ENCODE measurements at regions of chr12 and their contacts with region 1.

Region 1: GRCh38 chr12:57893431-57894353 is 47.2 kb upstream of the CTDSP2 start:
- DNase-seq: no peak
- ATAC-seq: no peak
- H3K4me3 Mint-ChIP-seq: no peak overlapping the region
- H3K27ac Mint-ChIP-seq: no peak overlapping the region
- H3K4me1 Mint-ChIP-seq: peaks cover 33% of the 10 kb centered on the region
- H3K27me3 Mint-ChIP-seq: peaks cover 35% of the 10 kb centered on the region

Region 2: DNA sequence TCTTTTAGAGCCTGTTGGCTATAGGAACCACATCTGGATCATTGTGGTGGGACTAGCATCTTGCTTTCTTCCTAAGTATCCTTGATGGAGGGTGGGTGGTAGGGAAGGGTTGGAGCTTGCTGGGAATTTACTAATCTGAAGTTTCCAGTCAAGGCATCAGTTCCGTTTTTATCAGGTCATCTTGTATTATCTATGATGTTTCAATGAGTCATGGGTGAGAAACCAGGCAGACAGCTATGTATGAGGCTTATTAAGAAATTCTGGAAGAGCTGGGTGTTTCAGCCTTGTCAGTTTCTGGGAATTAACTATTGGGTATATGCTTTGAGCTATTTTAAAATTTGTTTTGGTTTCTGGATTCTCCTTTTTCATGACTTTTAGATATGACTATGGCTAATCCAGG is 99.8 kb before region 1 on chr12:
- CTCF ChIA-PET with region 1: no interaction called
- DNase-seq: no peak
- ATAC-seq: no peak
- H3K4me3 Mint-ChIP-seq: no peak overlapping the region
- H3K27ac Mint-ChIP-seq: no peak overlapping the region
- H3K4me1 Mint-ChIP-seq: peaks cover 2% of the 10 kb centered on the region
- H3K27me3 Mint-ChIP-seq: no peaks in the 10 kb centered on the region

Region 3: GRCh38 chr12:57865090-57865751 is 28.5 kb before region 1 on chr12:
- CTCF ChIA-PET with region 1: interaction called, 13 read pairs
- DNase-seq: peak; percentile 65
- ATAC-seq: peak; percentile 89
- H3K4me3 Mint-ChIP-seq: peak overlapping the region; percentile 64
- H3K27ac Mint-ChIP-seq: no peak overlapping the region
- H3K4me1 Mint-ChIP-seq: peaks cover 8% of the 10 kb centered on the region
- H3K27me3 Mint-ChIP-seq: peaks cover 21% of the 10 kb centered on the region

Measured in activated CD8-positive, alpha-beta memory T cell treated with anti-CD3 and anti-CD28 coated beads, Interleukin-2, amount 10 ng/mL, durations not matched to agents 7 days and 5 days (primary cell).